OCI-LY7 (cell line): ENCODE measurements at regions of chr7 and their contacts with region 1.

Region 1: GRCh38 chr7:112939574-112940314 is 146.9 kb downstream of the GPR85 start:
- DNase-seq: peak; percentile 98
- H3K4me3 ChIP-seq: peak overlapping the region; percentile 83
- H3K27ac ChIP-seq: peak overlapping the region; percentile 57
- H3K4me1 ChIP-seq: peaks cover 24% of the 10 kb centered on the region
- CTCF ChIP-seq: no peak

Region 2: GRCh38 chr7:112481833-112482670 is 457.7 kb before region 1 on chr7:
- CTCF ChIA-PET with region 1: no interaction called
- POLR2A ChIA-PET with region 1: no interaction called
- intact Hi-C with region 1: no loop called
- DNase-seq: no peak
- H3K4me3 ChIP-seq: no peak overlapping the region
- H3K27ac ChIP-seq: no peak overlapping the region
- H3K4me1 ChIP-seq: no peaks in the 10 kb centered on the region
- CTCF ChIP-seq: no peak

Region 3: DNA sequence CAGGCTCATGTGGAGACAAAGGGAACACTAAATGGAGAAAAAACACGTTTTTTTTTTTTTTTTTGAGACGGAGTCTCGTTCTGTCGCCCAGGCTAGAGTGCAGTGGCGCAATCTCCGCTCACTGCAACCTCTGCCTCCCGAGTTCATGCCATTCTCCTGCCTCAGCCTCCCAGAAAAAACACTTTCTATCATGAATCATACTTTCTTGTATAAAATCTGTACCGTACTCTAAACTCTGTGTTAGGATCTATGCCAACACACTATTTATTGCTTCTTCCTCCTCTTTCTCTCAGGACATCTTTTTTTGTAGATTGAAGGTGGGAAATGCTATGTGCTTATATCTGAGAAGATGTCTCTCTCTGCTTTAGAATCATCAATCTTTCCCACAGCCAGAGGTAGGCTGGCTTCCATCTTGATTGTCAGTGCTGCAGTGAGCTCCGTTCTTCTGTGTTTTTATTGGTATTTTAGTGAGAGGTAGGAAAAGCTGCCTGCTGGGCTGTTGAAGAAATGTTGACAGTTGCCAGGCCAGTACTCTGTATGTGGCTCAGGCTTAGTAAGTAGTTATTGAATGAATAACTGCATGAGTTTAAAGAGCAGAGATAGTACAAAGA is 45.7 kb after region 1 on chr7:
- CTCF ChIA-PET with region 1: no interaction called
- POLR2A ChIA-PET with region 1: interaction called, 13 read pairs
- intact Hi-C with region 1: loop called (anchors 2 kb)
- DNase-seq: no peak
- H3K4me3 ChIP-seq: no peak overlapping the region
- H3K27ac ChIP-seq: no peak overlapping the region
- H3K4me1 ChIP-seq: peaks cover 42% of the 10 kb centered on the region
- CTCF ChIP-seq: no peak